ENCODE measurements at regions of chr22 and their contacts with region 1.

Region 1: DNA sequence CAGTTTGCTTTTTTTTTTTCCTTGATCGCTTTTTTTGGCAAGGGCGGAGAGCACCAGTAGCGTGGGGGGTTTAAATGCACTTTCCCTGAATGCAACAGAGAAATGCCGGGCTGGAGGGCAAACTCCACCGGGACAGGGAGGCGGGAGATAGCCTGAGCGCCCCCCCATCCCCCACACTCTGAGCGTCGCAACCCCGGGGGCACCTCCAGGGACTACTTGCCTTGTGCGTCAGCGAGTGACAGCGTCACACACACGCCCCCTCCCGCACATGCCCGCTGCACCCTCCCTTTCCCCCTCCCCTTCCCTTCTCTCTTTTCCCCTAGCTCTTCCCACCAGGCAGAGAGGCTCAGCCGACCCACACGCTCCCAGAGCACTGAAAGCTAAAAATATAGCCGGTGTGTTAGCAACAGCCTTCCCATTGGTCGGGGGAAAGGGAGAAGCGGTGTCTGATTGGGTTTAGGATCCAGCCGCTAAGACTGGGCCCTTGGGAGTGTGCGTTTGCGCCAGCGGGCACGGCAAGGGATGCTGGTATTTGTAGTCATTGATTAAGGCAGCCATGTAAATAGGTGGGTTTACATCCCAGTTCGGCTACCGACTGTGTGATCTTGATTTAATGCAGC is 1.7 kb upstream of the TOB2 start:
- DNase-seq: peak; percentile 93 to 99
- H3K4me3 ChIP-seq: peak overlapping the region; percentile 92
- H3K27ac ChIP-seq: peak overlapping the region; percentile 83
- H3K4me1 ChIP-seq: peaks cover 12% of the 10 kb centered on the region
- H3K27me3 ChIP-seq: no peaks in the 10 kb centered on the region
- CTCF ChIP-seq: no peak

Region 2: GRCh38 chr22:40856513-40857308 is 591.6 kb before region 1 on chr22 and contains the starts of genes ST13 and XPNPEP3:
- CTCF ChIA-PET with region 1: no interaction called
- POLR2A ChIA-PET with region 1: interaction called, 11 read pairs
- intact Hi-C with region 1: no loop called
- DNase-seq: peak; percentile 92 to 95
- H3K4me3 ChIP-seq: peak within 1 kb of the TSS; percentile 98
- H3K27ac ChIP-seq: peak within 1 kb of the TSS; percentile 88
- H3K4me1 ChIP-seq: peaks cover 43% of the 10 kb centered on the region
- H3K27me3 ChIP-seq: no peaks in the 10 kb centered on the region
- CTCF ChIP-seq: peak; percentile 53
- total RNA-seq, gene ST13: 285 and 303 TPM in 2 replicates
- total RNA-seq, gene XPNPEP3: 34.3 and 42.7 TPM in 2 replicates

Region 3: GRCh38 chr22:41091132-41092022 is 356.9 kb before region 1 on chr22:
- CTCF ChIA-PET with region 1: no interaction called
- POLR2A ChIA-PET with region 1: interaction called, 23 read pairs
- intact Hi-C with region 1: no loop called
- DNase-seq: peak; percentile 93 to 98
- H3K4me3 ChIP-seq: peak overlapping the region; percentile 92
- H3K27ac ChIP-seq: peak overlapping the region; percentile 97
- H3K4me1 ChIP-seq: peaks cover 28% of the 10 kb centered on the region
- H3K27me3 ChIP-seq: no peaks in the 10 kb centered on the region
- CTCF ChIP-seq: no peak

Region 4: DNA sequence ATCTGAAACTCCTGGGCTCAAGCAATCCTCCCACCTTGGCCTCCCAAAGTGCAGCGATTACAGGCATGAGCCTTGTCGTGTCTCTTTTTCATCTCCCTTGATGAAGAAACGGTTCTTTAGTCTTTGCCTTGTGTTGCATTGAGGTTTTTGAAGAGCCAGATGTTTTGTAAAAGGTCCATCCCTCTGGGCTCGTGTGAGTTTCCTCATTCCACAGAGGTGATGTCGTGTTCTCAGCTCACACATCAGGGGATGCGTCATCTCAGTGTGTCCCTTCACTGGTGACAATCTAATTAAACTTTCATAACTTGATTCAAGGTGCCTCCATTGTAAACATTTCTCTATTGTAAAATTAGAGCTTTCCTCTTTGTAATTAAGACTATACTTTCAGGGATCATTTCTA is 96.2 kb before region 1 on chr22:
- CTCF ChIA-PET with region 1: no interaction called
- POLR2A ChIA-PET with region 1: no interaction called
- intact Hi-C with region 1: no loop called
- DNase-seq: peak; percentile 50 to 64
- H3K4me3 ChIP-seq: no peak overlapping the region
- H3K27ac ChIP-seq: 0 out of 2 replicates have a peak overlapping the region, but pooled peaks have one; percentile 21
- H3K4me1 ChIP-seq: no peaks in the 10 kb centered on the region; the same call in 1 of the 2 replicates
- H3K27me3 ChIP-seq: no peaks in the 10 kb centered on the region
- CTCF ChIP-seq: no peak

Region 5: DNA sequence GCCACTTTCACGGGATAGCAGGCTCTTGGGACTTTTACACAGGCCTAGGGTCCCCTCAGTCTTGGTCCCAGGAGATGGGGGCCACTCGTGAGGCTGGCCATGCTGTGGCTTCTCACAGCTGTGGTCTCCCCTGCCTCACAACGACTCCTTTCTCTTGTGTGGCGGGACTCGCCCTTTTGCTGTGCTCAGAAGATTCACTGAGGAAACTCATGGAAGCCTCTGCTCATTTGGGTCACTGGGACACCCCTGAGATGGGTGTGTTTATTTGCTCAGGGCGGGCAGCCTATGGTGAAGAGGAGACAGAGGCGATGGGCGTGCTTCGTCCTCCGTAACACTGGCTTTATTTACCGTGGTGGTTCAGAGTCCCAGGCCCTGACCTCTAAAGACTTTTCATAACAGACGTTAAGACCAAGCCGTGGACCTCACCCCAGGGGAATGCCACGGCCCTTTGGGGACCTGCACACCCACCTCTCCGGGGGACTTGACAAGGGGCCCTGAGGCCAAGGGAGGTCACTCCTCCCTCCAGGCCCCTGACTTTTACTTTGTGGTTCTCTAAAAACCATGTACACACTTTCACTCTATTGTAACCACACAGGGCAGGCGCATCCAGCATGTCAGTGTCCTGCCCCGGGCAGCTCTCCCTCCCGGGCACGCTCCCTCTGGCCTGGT is 51.0 kb before region 1 on chr22:
- CTCF ChIA-PET with region 1: no interaction called
- POLR2A ChIA-PET with region 1: interaction called, 21 read pairs
- intact Hi-C with region 1: no loop called
- DNase-seq: no peak
- H3K4me3 ChIP-seq: no peak overlapping the region
- H3K27ac ChIP-seq: no peak overlapping the region
- H3K4me1 ChIP-seq: peaks cover 8% of the 10 kb centered on the region
- H3K27me3 ChIP-seq: no peaks in the 10 kb centered on the region
- CTCF ChIP-seq: no peak

Region 6: GRCh38 chr22:41468381-41469217 is 20.3 kb after region 1 on chr22 and contains the starts of genes ACO2 and PHF5A:
- CTCF ChIA-PET with region 1: no interaction called
- POLR2A ChIA-PET with region 1: interaction called, 11 read pairs
- intact Hi-C with region 1: loop called (anchors 1 kb)
- DNase-seq: peak; percentile 94 to 96
- H3K4me3 ChIP-seq: peak within 1 kb of the TSS; percentile 84
- H3K27ac ChIP-seq: peak within 1 kb of the TSS; percentile 78
- H3K4me1 ChIP-seq: peaks cover 25% of the 10 kb centered on the region
- H3K27me3 ChIP-seq: no peaks in the 10 kb centered on the region
- CTCF ChIP-seq: no peak
- total RNA-seq, gene ACO2: 76.7 and 80.0 TPM in 2 replicates
- total RNA-seq, gene PHF5A: 49.1 and 62.9 TPM in 2 replicates

Region 7: DNA sequence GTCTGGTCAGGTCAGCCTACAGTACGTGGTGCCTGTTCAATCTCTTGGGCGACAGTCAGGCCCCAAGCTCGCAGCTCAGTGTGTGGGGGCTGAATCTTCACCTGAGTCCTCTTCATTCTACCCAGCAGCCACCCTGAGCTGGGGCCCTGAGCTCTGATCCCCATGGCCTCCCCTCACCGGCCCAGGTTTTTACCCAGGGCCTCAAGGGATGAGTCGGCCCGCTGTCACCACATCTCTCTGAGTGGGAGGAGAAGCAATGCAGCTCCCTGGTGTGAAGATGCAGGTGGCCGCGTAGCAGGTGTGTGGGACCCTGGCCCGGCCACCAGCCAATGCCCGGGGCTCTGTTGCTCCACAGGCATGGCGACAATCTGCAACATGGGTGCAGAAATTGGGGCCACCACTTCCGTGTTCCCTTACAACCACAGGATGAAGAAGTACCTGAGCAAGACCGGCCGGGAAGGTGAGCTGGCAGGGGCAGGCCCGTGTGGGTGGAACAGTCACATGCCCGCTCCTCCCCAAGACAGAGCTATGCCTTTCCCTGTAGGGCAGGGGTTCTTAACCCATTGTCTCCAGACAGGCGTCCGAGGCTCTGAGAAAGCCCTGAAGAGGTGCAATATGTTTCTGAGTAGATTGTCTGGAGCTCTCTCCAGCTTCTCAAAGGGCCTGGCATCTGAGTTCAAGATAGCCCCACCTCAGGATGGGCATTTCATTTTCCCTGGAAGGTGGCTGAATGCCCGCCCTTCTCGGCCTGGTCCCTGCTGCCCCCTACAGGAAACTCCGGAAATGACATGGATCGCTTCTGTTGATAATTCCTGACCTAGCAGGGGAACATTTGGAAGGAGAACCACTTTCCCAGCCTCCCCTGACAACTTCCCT is 69.1 kb after region 1 on chr22:
- CTCF ChIA-PET with region 1: interaction called, 4 read pairs
- POLR2A ChIA-PET with region 1: interaction called, 5 read pairs
- intact Hi-C with region 1: loop called (anchors 2 kb)
- DNase-seq: peak; percentile 53 to 75
- H3K4me3 ChIP-seq: no peak overlapping the region
- H3K27ac ChIP-seq: peak overlapping the region; percentile 9; the same call in 1 of the 2 replicates
- H3K4me1 ChIP-seq: peaks cover 18% of the 10 kb centered on the region
- H3K27me3 ChIP-seq: no peaks in the 10 kb centered on the region
- CTCF ChIP-seq: peak; percentile 99

Measured in PC-9 (cell line).